ENCODE measurements at regions of chr1 and their contacts with region 1.

Region 1: DNA sequence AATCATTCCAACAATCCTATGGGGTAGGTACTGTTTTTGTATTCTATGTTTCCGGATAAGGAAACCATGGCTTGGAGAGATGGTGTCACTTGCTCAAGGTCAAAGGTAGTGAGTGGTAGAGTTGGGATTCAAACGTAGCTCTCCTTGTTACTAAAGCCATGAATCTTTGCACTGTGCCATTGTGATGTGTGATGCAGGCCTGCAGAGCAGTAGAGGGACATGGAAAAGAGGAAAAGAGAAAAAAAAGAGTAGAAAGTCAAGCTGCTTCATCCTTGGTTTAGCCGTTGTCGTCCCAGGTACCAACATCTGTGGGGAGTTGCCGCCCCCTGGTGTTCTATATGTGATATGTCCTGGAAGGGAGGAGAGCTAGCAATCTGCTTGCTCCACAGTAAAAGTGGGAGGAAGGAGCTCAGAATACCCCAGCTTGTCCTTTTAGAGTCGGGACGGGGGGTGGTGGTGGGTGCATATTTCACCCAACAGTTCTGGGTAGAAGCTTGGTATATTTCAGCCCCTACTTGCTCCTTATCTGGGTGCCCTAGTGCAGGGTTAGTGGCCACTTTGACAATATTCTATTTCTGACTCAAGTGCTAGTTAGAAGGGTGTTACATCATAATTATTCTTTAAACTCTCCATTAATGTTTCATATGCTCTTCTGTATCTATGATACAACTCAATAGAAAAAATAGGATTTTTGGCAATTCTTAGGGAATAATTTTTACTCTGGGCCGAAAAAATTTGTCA is 98.4 kb downstream of the EBNA1BP2 start:
- DNase-seq: peak; percentile 76
- ATAC-seq: peak; percentile 87 to 89

Region 2: DNA sequence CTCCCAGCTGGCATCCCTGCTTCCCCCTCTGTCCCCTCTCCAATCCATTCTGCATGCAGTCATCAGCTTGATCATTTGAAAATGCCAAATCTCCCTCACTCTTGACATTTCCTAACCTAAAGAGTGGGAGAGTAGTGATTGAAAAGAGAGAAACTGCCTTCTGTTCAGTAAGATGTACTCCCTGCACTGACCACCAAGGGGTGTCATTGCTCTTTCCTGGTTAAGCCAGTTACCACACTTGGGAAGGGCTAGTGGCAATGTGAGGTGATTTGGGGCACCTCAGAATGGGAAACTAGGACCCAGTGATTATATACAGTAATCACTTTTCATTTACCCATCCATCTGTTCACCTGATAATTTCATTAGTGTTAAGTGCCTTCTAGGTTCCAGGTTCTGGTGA is 295.8 kb before region 1 on chr1:
- intact Hi-C with region 1: loop called (anchors 5 to 10 kb)
- DNase-seq: no peak
- ATAC-seq: peak; percentile 35 to 70

Region 3: DNA sequence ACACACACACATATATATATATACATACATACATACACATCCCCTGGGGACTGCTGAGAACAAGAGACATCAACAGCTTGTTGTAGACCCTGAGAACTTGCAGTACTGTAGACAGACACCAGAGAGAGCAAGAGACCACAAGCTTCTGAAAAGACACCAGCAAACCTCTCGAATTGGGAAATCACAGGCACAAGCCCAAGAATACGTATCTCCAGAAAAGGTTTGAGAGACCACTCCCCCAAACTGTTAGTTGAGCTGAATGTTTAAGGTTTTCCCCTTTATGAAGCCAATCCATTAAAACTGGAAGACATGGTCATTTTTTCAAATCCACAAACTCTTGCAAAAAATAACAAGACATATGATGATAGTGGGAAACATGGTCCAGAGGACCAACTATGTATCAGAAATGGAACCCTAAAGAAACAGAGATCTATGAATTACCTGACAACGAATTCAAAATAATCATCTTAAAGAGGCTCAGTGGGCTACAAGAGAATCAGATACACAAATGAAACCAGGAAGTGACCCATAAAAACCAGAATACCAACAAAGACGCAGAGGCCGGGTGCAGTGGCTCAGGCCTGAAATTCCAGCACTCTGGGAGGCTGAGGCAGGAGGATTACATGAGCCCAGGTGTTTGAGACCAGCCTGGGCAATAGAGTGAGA is 160.1 kb before region 1 on chr1:
- intact Hi-C with region 1: loop called (anchors 2 kb)
- DNase-seq: peak; percentile 42
- ATAC-seq: peak; percentile 71 to 78

Region 4: DNA sequence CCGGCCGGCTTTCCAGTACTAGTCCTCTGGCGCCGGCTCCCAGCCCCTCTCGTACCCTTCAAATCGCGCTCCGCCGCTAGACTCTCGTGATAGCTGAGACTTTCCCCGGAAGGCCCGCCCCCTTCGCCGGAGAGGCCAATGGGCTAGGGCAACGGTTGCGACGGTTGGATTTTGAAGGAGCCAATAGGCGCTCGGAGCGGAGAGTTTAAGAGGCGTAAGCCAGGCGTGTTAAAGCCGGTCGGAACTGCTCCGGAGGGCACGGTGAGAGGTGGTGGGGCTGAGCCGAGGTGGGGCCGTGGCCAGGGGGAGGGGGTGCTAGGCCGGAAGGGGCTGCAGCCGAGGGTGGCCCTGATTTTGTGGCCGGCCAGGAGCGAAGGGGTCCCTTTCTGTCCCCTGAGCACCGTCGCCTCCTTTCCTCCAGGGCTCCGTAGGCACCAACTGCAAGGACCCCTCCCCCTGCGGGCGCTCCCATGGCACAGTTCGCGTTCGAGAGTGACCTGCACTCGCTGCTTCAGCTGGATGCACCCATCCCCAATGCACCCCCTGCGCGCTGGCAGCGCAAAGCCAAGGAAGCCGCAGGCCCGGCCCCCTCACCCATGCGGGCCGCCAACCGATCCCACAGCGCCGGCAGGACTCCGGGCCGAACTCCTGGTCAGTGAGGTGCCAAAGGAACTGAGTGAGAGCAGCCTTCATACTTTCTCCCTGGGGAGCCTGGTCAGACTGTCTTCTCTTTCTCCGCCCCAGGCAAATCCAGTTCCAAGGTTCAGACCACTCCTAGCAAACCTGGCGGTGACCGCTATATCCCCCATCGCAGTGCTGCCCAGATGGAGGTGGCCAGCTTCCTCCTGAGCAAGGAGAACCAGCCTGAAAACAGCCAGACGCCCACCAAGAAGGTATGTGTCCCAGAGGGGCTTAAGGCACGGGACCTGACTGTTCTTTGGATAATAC is 285.4 kb after region 1 on chr1 and contains the start of gene CDC20:
- intact Hi-C with region 1: no loop called
- DNase-seq: peak; percentile 99
- ATAC-seq: peak; percentile 98 to 100
- total RNA-seq, gene CDC20: 0.34 to 1.4 TPM